AG04449 (cell line): ENCODE measurements at regions of chr18 and their contacts with region 1.

Region 1: DNA sequence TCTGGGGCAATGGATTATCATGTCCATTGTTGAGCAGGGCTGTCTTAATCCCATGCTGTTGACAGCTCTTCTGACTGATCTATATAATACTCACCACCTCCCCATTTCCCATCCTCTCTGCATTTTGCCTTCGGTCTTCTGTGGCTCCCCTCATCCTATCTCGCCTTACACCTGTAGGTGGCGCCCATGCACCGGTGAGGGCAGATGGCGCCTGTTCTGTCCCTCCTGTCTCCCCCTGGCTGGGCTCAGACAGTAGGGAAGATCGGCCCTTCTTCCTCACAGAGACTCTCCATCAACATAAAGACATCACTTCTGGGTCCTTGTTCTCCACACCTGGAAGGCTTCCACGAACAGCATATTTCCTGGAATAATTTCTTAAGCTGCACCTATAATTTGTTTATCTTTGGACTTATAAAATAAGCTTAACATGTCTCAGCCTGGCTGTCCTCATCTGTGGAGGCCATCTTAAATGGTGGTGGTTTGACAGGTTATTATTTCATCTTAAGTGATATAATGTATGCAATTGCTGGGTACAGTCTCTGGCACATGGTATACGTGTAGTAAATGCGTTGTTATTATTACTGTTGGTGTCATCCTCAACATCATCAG is 10.9 kb upstream of the CDH20 start:
- DNase-seq: no peak
- H3K4me3 ChIP-seq: no peak overlapping the region
- CTCF ChIP-seq: peak; percentile 97

Region 2: DNA sequence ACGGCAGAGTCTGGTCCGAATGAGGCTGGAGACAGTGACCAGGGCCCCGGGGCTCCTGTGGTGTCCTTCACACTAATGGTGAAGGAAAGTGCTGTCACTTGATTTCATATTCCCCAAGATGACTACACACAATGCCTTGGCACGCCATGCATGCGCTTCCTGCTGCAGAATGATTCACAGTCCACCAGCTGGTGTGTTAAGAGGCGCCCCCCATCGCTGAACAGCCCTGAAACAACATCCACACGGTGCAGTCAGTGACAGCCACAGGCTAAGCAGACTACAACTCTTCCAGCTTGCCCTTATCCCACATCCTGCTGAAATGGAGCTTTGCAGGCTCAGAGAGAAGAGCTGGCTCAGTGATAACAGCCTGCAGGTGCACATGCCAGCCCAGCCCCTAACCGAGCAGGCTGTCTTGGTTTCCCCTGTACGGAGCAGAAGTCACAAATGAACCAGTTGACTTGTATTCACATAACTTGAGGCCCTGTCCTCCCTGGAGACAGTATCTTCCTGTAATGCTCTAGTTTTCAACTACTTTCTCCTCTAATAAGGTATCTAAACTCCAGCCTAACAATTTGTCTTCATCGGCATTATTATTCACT is 13.5 kb before region 1 on chr18:
- CTCF ChIA-PET with region 1: no interaction called
- POLR2A ChIA-PET with region 1: no interaction called
- DNase-seq: no peak
- H3K4me3 ChIP-seq: no peak overlapping the region
- CTCF ChIP-seq: no peak

Region 3: DNA sequence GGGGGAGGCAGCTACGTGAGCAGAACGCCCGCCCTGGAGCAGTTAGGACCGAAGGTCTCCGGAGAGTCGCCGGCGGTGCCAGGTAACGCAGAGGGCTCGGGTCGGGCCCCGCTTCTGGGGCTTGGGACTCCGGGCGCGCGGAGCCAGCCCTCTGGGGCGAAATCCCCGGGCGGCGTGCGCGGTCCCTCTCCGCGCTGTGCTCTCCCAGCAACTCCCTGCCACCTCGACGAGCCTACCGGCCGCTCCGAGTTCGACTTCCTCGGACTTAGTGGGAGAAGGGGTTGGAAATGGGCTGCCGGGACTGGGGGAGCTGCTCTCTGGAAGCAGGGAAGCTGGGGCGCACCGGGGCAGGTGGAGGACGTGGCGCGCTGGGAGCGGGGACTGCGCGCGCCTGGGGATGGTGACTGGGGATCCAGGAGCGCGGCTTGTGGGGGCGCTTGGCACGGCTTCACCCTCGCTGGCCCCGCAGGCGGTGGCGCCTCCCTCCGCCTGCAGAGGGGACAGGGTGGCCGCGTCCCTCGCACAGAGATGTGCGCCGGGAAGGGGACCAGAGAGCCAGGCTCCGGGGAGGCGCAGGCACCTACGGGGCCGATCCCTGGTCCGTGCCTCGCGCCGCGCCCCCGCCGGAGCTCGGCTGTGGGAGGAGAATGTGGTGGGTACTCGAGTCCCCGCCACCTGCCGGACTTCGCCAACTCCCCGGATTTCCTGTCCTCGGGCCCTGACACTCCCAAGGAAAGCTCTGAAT is 11.5 kb after region 1 on chr18:
- CTCF ChIA-PET with region 1: interaction called, 19 read pairs
- POLR2A ChIA-PET with region 1: no interaction called
- DNase-seq: no peak
- H3K4me3 ChIP-seq: peak overlapping the region; percentile 48
- CTCF ChIP-seq: no peak

Region 4: DNA sequence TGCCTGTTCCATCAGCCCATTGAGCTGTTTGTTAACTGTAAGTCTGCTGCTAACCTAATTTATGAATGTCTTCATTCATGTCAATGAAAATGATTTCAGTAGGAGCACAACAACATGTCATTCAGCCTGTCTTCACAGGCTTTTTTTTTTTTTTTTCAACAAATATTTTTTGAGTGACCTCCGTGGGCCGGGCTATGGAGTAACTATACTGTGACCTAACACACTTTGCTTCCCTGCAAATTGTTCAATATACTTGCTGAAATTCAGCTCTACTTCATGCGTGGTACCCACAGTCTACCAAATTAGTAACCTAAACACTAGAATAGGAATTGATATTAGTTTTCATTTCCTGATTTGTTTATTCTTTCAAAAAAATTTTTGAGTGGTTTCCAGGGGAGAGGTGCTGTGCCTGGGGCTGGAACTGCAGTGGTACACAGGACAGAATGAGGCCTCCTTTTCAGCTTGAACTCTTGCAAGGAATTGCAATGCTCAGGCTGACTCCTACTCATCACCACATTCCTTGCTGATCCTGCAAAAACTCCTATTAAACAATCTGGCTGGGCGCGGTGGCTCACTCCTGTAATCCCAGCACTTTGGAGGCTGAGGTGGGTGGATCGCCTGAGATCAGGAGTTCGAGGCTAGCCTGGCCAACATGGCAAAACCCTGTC is 98.0 kb after region 1 on chr18:
- CTCF ChIA-PET with region 1: interaction called, 14 read pairs
- POLR2A ChIA-PET with region 1: no interaction called
- DNase-seq: no peak
- H3K4me3 ChIP-seq: no peak overlapping the region
- CTCF ChIP-seq: no peak

Region 5: DNA sequence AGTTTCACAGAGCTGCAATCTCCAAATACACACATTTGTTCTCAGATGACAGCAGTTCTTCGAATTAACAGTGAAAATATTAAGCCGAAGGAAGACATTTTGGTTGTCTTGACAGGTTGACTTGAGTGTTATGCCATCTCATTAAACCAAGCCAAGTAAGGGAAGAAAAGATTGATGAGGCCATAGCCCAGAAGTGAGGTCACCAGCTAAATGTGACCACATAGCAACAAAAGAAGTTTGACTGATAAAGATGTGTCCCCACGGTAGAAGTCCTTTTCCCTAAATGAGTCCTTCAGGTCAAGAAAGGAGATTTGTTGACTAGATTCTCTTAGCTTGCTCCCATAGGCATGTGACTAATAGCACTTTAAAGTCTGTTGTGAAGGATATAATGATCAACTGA is 167.0 kb after region 1 on chr18:
- CTCF ChIA-PET with region 1: interaction called, 32 read pairs
- POLR2A ChIA-PET with region 1: no interaction called
- DNase-seq: no peak
- H3K4me3 ChIP-seq: no peak overlapping the region
- CTCF ChIP-seq: no peak

Region 6: GRCh38 chr18:61496374-61496773 is 174.0 kb after region 1 on chr18:
- CTCF ChIA-PET with region 1: interaction called, 596 read pairs
- POLR2A ChIA-PET with region 1: no interaction called
- DNase-seq: no peak
- H3K4me3 ChIP-seq: no peak overlapping the region
- CTCF ChIP-seq: no peak

Region 7: GRCh38 chr18:61551586-61551985 is 229.2 kb after region 1 on chr18:
- CTCF ChIA-PET with region 1: interaction called, 13 read pairs
- POLR2A ChIA-PET with region 1: no interaction called
- DNase-seq: peak; percentile 62
- H3K4me3 ChIP-seq: no peak overlapping the region
- CTCF ChIP-seq: peak; percentile 86

Region 8: DNA sequence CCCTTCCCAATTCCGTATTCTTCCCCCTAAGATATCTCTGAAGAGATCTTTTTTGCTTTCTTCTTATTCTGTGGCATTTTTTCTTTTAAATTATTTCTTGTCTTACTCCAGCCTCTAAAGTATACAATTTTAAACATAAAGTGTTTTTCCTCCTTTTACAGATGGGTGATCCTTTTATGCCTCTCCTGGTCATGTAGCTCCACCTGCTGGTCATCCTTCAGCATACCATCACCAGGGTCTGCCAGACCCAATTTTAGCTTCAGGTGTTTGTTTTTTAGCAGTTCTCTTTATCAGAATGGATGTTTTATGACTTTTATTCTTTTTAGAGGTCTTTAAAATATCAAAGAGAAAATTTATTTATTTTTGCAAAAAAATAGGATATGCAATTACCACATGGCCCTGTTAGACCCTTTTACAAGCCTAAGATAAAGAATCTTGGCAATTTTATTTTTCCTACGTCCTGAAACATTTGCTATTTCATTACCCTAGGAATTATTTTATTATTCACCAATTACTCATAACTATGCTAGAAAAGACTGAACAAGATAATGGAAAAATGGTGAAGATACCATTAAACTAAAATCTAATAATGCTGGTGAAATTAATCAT is 809.0 kb after region 1 on chr18:
- CTCF ChIA-PET with region 1: interaction called, 19 read pairs
- POLR2A ChIA-PET with region 1: no interaction called
- DNase-seq: no peak
- H3K4me3 ChIP-seq: no peak overlapping the region
- CTCF ChIP-seq: peak; percentile 71